ENCODE measurements at regions of chr11 and their contacts with region 1.

Region 1: GRCh38 chr11:64304316-64305072 is 830 bp upstream of the ESRRA start:
- DNase-seq: peak; percentile 87 to 90 (median 88)
- H3K4me3 ChIP-seq: peak overlapping the region; percentile 64
- H3K4me3 Mint-ChIP-seq: peak overlapping the region; percentile 88 to 97 (median 94)
- H3K27ac ChIP-seq: peak overlapping the region; percentile 90
- H3K27ac Mint-ChIP-seq: peak overlapping the region; percentile 91 to 99 (median 96)
- H3K4me1 ChIP-seq: peaks cover 41% of the 10 kb centered on the region
- H3K4me1 Mint-ChIP-seq: peaks cover 20 to 48% (median 31%) of the 10 kb centered on the region in 4 donors
- H3K27me3 ChIP-seq: peaks cover 20% of the 10 kb centered on the region
- H3K27me3 Mint-ChIP-seq: peaks cover 10 to 12% of the 10 kb centered on the region in 2 donors

Region 2: DNA sequence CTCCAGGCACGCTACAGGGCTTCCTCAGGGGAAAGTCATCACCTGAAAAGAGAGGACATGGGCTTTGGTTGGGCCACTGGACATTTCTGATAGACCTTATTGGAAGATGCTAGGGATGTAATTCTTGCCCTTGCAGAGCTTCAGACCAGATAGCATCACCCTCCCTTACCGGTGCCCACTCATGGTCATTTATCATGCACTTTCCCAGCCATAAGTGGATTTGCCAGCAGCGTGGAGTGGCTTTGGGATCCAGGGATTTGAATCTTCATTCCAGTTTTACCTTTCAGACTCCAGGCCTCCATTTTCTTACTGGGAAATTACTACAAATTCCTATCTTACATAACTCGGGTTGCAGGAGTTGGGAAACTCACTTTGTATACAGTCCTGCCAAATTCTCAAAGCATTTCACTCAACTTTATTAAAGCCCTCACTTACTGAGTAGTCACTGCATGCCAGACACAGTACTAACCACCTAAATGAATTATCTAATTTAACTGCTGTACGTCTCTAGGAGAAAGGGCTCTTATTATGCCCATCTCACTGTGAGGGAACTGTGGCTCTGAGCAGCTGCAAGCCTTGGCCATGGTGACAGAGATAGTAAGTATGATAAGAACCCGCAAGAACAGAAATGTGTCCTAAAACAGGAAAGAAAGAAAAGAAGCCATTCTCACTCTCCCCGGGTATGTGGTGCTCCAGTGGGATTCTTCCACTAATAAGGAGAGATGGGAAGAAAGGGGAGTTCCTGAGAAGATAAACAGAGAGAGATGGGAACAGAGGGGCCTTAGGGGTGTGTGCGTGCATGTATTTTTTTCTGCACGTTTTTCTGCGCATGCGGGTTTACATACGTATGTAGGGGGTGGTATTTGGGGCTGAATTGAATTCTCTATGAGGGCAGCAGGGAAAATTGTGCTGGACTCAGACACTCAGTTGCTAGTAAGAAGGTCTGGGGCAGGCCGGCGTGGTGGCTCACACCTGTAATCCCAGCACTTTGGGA is 1393.1 kb before region 1 on chr11:
- CTCF ChIA-PET with region 1: no interaction called
- POLR2A ChIA-PET with region 1: no interaction called
- intact Hi-C with region 1: no loop called
- DNase-seq: no peak
- H3K4me3 ChIP-seq: no peak overlapping the region
- H3K4me3 Mint-ChIP-seq: no peak overlapping the region
- H3K27ac ChIP-seq: no peak overlapping the region
- H3K27ac Mint-ChIP-seq: no peak overlapping the region
- H3K4me1 ChIP-seq: no peaks in the 10 kb centered on the region
- H3K4me1 Mint-ChIP-seq: peaks cover 0 to 6% (median under 1%) of the 10 kb centered on the region in 4 donors
- H3K27me3 ChIP-seq: no peaks in the 10 kb centered on the region
- H3K27me3 Mint-ChIP-seq: peaks cover 3 to 11% of the 10 kb centered on the region in 2 donors

Region 3: DNA sequence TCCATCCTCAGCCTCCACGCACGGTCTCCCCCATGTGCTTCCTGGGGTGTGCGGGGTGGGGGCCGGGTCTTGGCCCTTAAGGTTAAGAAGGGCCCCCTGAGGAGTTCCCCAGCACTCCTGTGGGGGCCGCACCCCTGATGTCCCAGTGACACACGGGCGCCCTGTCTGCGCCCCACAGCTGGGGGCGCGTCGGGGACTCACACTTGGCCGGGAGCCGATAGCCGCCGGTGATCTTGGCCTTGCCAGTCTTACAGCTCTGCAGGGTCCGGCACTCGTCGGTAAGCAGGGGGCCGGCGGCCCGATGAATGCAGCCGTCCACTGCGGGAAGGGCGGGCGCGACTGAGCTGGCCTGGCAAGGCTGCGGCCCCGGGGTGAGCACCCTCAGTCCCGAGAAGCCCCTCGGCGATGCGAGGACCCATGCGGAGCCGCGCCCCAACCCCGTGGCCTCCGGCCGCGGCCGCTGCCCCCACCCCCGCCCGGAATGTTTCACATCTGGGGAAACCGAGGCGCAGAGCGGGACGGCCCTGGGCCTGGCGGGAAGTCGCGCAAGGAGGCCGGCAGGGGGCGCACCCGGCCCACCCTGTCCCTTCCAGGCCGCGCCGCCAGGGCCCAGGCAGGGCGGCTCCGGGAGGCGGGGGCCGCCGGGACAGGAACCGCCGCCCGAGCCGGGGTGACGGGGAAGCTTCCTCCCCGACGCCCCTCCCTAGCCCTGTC is 304.3 kb before region 1 on chr11:
- CTCF ChIA-PET with region 1: interaction called, 9 read pairs
- POLR2A ChIA-PET with region 1: interaction called, 3 read pairs
- intact Hi-C with region 1: loop called (anchors 10 kb)
- DNase-seq: peak; percentile 66 to 79 (median 76)
- H3K4me3 ChIP-seq: peak overlapping the region in 1 of 2 donors; percentile 28
- H3K4me3 Mint-ChIP-seq: peak overlapping the region in 6 of 8 donors; percentile 21 to 76 (median 50)
- H3K27ac ChIP-seq: no peak overlapping the region
- H3K27ac Mint-ChIP-seq: no peak overlapping the region
- H3K4me1 ChIP-seq: peaks cover 8% of the 10 kb centered on the region
- H3K4me1 Mint-ChIP-seq: peaks cover 0 to 5% (median 3%) of the 10 kb centered on the region in 4 donors
- H3K27me3 ChIP-seq: no peaks in the 10 kb centered on the region
- H3K27me3 Mint-ChIP-seq: no peaks in the 10 kb centered on the region

Region 4: DNA sequence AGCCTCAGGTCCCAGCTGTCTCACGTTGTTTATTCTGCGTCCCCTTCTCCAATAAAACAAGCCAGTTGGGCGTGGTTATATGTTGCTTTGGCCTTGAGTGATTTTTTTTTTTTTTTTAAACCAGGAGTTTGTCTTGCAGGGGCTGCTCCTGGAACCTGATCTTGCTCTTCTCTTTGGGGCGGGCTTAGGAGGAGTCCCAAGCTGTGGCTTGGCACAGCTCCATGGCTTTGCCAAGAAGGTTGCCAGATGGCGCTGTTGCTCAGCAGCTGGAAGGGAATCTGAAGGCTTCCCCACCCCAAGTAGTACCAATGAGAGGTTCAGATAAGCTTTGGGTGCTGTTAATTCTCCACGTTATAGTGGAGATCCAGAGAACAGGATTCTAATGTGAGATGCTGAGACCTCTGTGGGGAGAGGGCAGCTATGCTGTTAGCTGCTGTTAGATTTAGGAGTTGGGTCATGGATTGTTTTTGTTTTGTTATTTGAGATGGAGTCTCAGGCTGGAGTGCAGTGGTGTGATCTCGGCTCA is 100.0 kb before region 1 on chr11:
- CTCF ChIA-PET with region 1: interaction called, 367 read pairs
- POLR2A ChIA-PET with region 1: interaction called, 192 read pairs
- intact Hi-C with region 1: loop called (anchors 1 kb)
- DNase-seq: peak; percentile 85 to 90 (median 86)
- H3K4me3 ChIP-seq: no peak overlapping the region
- H3K4me3 Mint-ChIP-seq: peak overlapping the region; percentile 62 to 89 (median 82)
- H3K27ac ChIP-seq: no peak overlapping the region
- H3K27ac Mint-ChIP-seq: peak overlapping the region; percentile 85 to 97 (median 94)
- H3K4me1 ChIP-seq: peaks cover 44% of the 10 kb centered on the region
- H3K4me1 Mint-ChIP-seq: peaks cover 16 to 64% (median 39%) of the 10 kb centered on the region in 4 donors
- H3K27me3 ChIP-seq: no peaks in the 10 kb centered on the region
- H3K27me3 Mint-ChIP-seq: no peaks in the 10 kb centered on the region

Region 5: DNA sequence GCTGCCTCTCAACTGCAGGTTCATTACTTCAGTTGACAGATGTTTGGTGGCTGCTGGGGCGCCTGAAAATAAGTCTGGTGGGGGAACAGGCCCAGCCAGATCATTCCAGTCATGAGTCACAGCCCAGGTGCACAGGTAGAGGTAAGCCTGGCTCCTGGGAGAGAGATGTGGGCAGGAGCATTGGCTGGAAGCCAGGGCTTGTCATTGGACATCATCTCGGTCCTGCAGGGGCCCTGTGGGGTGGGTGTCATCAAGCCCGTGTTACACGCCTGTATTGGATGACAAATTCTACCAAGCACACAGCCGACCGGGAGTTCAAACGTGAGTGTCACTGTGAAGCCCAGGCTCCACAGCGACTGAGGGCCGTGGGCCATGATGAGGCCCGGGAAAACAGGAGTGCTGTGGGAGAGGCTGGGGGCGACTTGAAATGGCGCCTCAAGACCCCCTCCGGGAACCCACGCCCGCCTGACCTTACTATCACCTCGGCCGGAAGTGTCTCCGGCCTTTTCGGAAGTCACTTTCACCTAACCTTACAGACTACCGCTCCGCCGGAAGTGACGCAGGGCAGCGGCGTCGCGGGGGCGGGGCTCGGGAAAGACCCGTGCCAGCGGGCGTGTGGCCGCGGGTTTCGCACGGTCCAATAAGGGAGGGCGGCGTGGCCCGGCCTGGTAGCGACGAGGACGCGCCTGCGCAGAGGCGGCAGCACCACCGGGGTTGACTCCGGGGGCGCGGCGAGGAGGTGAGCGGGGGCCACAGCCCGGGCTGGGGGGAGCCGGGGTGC is 63.9 kb before region 1 on chr11 and contains the start of gene FKBP2:
- CTCF ChIA-PET with region 1: interaction called, 121 read pairs
- POLR2A ChIA-PET with region 1: interaction called, 52 read pairs
- intact Hi-C with region 1: loop called (anchors 1 kb)
- DNase-seq: peak; percentile 97 to 99 (median 99)
- H3K4me3 ChIP-seq: peak within 1 kb of the TSS; percentile 67 to 73
- H3K4me3 Mint-ChIP-seq: peak within 1 kb of the TSS; percentile 87 to 97 (median 88)
- H3K27ac ChIP-seq: peak within 1 kb of the TSS; percentile 99
- H3K27ac Mint-ChIP-seq: peak within 1 kb of the TSS; percentile 99 to 100 (median 100)
- H3K4me1 ChIP-seq: peaks cover 38% of the 10 kb centered on the region
- H3K4me1 Mint-ChIP-seq: peaks cover 14 to 52% (median 29%) of the 10 kb centered on the region in 4 donors
- H3K27me3 ChIP-seq: no peaks in the 10 kb centered on the region
- H3K27me3 Mint-ChIP-seq: no peaks in the 10 kb centered on the region
- total RNA-seq, gene FKBP2: 41.4 to 46.4 TPM

Region 6: DNA sequence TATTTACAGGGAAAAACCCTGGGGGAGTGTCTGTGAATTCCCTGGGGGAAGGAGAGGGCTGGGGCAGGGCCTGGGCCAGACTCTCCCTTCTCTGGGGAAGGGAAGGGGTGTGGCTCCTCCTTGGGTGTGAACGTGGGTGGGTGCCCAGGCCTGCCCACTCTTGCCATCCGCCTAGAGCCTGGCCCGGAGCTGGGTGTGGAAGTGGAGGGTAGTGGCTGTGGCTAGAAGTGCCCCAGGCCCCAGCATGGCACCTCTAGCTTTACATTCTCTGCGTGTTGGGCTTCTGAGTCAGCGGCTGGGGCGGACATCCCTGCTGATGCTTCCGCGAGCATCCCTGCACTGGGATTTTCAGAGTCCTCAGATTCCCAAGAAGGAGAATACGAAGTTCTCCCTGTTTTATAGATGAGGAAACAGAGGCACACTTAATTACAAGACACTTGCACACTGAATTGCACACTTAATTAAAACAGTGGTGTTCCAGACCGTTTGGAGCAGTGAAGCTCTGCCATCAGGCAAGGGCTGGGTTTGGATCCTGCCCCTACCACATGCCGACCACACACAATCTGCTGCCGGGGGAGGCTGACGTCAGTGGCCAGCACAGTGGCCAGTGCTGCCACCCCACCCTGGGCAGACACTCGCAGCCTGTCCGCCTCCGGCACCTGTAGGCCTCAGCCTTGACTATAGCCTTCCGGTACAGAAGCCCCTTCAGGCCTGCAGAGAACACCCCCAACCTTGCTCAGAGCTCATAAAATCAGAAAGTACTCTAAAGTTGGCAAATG is 27.7 kb before region 1 on chr11:
- CTCF ChIA-PET with region 1: interaction called, 92 read pairs
- POLR2A ChIA-PET with region 1: interaction called, 128 read pairs
- intact Hi-C with region 1: no loop called
- DNase-seq: no peak
- H3K4me3 ChIP-seq: no peak overlapping the region
- H3K4me3 Mint-ChIP-seq: no peak overlapping the region
- H3K27ac ChIP-seq: no peak overlapping the region
- H3K27ac Mint-ChIP-seq: no peak overlapping the region
- H3K4me1 ChIP-seq: peaks cover 3% of the 10 kb centered on the region
- H3K4me1 Mint-ChIP-seq: peaks cover 3 to 9% (median 5%) of the 10 kb centered on the region in 4 donors
- H3K27me3 ChIP-seq: no peaks in the 10 kb centered on the region
- H3K27me3 Mint-ChIP-seq: no peaks in the 10 kb centered on the region

Region 7: DNA sequence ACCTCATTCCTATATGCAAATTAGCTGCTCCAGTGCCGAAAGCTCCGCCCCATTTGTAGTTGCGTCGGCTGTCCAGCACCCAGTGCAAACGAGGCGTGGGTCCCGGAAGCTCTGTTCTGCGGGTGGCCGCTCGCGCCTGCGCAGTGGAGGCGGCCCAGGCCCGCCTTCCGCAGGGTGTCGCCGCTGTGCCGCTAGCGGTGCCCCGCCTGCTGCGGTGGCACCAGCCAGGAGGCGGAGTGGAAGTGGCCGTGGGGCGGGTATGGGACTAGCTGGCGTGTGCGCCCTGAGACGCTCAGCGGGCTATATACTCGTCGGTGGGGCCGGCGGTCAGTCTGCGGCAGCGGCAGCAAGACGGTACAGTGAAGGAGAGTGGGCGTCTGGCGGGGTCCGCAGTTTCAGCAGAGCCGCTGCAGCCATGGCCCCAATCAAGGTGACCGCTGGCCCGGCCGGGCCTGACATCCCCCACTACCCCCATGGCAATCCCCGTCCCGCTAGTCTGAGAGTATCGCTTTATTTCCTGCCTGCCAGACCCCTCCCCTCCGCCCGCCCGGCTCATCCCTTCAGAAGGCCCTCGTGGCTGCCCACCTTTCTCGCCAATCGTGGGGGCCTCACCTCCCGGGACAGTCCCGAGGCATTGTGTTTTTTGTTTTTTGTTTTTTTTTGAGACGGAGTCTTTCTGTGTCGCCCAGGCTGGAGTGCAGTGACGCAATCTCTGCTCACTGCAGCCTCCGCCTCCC is 13.6 kb after region 1 on chr11 and contains the start of gene PRDX5:
- CTCF ChIA-PET with region 1: interaction called, 54 read pairs
- POLR2A ChIA-PET with region 1: interaction called, 124 read pairs
- intact Hi-C with region 1: loop called (anchors 1 kb)
- DNase-seq: peak; percentile 96 to 98 (median 97)
- H3K4me3 ChIP-seq: peak within 1 kb of the TSS; percentile 68 to 72
- H3K4me3 Mint-ChIP-seq: peak within 1 kb of the TSS; percentile 95 to 99 (median 96)
- H3K27ac ChIP-seq: peak within 1 kb of the TSS; percentile 96
- H3K27ac Mint-ChIP-seq: peak within 1 kb of the TSS; percentile 97 to 100 (median 100)
- H3K4me1 ChIP-seq: peaks cover 26% of the 10 kb centered on the region
- H3K4me1 Mint-ChIP-seq: peaks cover 17 to 44% (median 29%) of the 10 kb centered on the region in 4 donors
- H3K27me3 ChIP-seq: no peaks in the 10 kb centered on the region
- H3K27me3 Mint-ChIP-seq: no peaks in the 10 kb centered on the region
- total RNA-seq, gene PRDX5: 57.6 to 58.7 TPM

Region 8: DNA sequence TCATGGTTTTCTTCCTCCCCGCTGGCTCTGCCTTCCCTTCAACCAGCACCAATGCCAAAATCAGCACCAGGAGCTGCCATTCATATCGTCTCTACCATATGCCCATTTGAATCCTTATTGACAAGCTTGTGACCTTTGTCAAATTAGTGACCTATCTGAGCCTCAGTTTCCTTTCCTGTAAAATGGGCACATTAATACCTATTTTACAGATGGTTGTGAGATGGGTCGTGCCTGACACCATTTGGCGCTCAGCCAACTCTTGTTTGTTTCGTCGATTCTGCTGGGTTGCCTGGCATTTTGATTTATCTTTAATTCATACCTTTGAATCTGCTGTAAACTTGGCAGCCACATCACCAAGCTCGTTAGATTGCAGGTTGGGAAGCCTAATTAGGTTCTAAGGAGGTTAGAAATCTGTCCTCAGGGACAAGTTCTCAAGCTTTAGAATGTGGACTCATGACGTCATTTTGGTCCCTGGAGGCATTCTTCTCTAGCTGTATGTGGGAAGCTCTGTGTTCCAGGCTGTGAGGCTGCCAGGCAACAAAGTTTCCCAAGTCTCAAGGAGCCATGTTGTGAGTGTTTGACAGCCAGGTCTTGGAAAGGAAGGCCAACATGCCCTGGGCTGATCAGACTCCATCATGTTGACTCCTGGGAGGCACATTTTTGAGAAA is 115.5 kb after region 1 on chr11:
- CTCF ChIA-PET with region 1: no interaction called
- POLR2A ChIA-PET with region 1: no interaction called
- intact Hi-C with region 1: no loop called
- DNase-seq: no peak
- H3K4me3 ChIP-seq: no peak overlapping the region
- H3K4me3 Mint-ChIP-seq: peak overlapping the region in 1 of 8 donors; percentile 2
- H3K27ac ChIP-seq: no peak overlapping the region
- H3K27ac Mint-ChIP-seq: no peak overlapping the region
- H3K4me1 ChIP-seq: no peaks in the 10 kb centered on the region
- H3K4me1 Mint-ChIP-seq: peaks cover 0 to 1% (median 0%) of the 10 kb centered on the region in 4 donors
- H3K27me3 ChIP-seq: no peaks in the 10 kb centered on the region
- H3K27me3 Mint-ChIP-seq: peaks cover 0 to 2% of the 10 kb centered on the region in 2 donors

Measured in CD4-positive, alpha-beta memory T cell (primary cell).